Endothelial cell of umbilical vein (primary cell): ENCODE measurements at regions of chr3 and their contacts with region 1.

Region 1: GRCh38 chr3:53269888-53270880 is 14.4 kb upstream of the TKT start:
- DNase-seq: peak; percentile 90
- H3K4me3 ChIP-seq: no peak overlapping the region
- H3K27ac ChIP-seq: peak overlapping the region; percentile 96
- H3K4me1 ChIP-seq: peaks cover 13% of the 10 kb centered on the region
- H3K27me3 ChIP-seq: no peaks in the 10 kb centered on the region
- CTCF ChIP-seq: no peak
- POLR2A ChIP-seq: no peak

Region 2: DNA sequence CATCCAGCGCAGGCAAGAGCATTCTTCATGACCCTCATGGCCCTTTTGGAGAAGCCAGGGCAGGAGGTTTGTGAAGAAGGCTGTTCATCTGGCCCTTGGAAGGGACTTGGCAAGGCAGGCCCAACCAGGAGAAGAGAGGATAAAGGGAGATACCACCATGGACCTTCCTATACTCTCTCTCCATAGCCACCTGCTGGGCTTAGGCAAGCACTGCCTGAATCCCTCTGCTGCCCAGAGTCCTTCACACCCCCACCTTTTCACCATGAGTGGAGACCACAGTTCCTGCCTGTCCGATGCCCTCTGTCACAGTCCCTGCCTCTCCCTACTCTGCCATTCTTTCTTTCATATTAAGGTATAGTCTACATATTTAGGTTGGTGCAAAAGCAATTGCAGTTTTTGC is 213.7 kb before region 1 on chr3:
- CTCF ChIA-PET with region 1: no interaction called
- POLR2A ChIA-PET with region 1: no interaction called
- dilution Hi-C with region 1: no loop called
- intact Hi-C with region 1: no loop called
- DNase-seq: no peak
- H3K4me3 ChIP-seq: no peak overlapping the region
- H3K27ac ChIP-seq: no peak overlapping the region
- H3K4me1 ChIP-seq: no peaks in the 10 kb centered on the region
- H3K27me3 ChIP-seq: no peaks in the 10 kb centered on the region
- CTCF ChIP-seq: peak; percentile 5 to 40
- POLR2A ChIP-seq: no peak

Region 3: DNA sequence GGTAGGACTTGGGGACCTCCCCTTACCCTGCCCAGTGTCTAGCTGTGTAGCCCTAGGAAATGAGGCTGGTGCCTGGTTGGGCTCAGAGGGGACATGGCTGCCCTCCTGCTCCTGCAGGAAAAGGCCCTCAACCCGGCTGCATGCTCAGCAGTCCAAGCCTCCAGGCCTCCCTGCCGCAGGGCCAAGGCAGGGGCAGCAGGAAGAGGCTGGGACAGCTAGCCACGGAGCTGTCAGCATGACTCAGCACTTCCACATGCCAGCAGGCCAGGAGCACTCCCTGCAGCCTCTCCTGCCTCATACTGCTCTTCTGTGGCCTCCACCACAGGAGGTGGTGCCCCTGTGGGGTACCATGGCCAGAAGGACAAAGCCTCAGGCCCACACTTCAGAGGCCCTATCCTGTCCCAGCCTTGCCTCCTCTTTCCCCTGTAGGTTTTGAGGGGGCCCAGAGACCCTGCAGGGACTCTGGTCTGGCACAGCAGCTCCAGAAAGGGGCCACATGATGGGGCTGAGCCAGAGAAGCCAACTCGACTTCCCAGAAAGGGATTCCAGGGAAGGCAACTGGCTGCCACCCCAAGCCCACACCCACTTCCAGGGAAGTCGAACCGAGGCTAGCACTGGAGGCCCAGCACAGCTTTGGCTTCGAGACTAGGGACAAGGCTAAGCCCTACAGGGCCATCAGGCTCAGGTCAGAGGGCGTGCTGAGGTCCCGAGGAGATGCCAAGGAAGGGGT is 33.9 kb before region 1 on chr3:
- CTCF ChIA-PET with region 1: interaction called, 3 read pairs
- POLR2A ChIA-PET with region 1: no interaction called
- dilution Hi-C with region 1: no loop called
- intact Hi-C with region 1: loop called (anchors 1 kb)
- DNase-seq: peak; percentile 90
- H3K4me3 ChIP-seq: no peak overlapping the region
- H3K27ac ChIP-seq: peak overlapping the region; percentile 88
- H3K4me1 ChIP-seq: peaks cover 39% of the 10 kb centered on the region
- H3K27me3 ChIP-seq: no peaks in the 10 kb centered on the region
- CTCF ChIP-seq: no peak
- POLR2A ChIP-seq: peak; percentile 46

Region 4: GRCh38 chr3:53255775-53256703 is 14.1 kb before region 1 on chr3 and contains the start of gene TKT:
- CTCF ChIA-PET with region 1: interaction called, 4 read pairs
- POLR2A ChIA-PET with region 1: no interaction called
- dilution Hi-C with region 1: no loop called
- intact Hi-C with region 1: loop called (anchors 1 kb)
- DNase-seq: peak; percentile 84
- H3K4me3 ChIP-seq: peak within 1 kb of the TSS; percentile 70 to 98 (median 88)
- H3K27ac ChIP-seq: peak within 1 kb of the TSS; percentile 44
- H3K4me1 ChIP-seq: peaks cover 20% of the 10 kb centered on the region
- H3K27me3 ChIP-seq: no peaks in the 10 kb centered on the region
- CTCF ChIP-seq: no peak
- POLR2A ChIP-seq: peak; percentile 91
- total RNA-seq, gene TKT: 510 and 586 TPM in 2 replicates

Region 5: DNA sequence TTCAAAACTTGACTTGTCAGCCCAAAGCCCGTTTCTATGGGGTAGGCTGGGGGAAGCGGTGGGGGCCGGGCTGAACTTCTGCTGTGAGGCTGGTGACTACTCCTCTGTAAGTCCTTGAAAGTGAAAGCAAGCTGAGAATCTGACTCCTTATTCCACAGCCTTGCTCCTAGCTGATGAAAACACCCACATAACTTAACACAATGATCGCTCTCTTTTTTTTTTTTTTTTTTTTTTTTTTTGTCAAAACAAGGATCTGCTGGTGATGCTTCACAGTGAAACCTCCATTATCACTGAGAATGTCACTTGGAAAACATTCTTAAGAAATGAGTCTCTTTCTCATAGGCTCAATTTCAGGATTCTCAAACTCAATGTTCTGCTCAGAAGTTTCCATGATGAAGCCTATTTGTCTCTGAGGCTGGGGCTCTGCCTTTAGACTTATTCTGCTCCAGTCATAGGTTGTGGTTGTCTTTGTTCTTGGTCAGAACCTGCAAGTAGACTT is 17.0 kb after region 1 on chr3:
- CTCF ChIA-PET with region 1: interaction called, 13 read pairs
- POLR2A ChIA-PET with region 1: no interaction called
- dilution Hi-C with region 1: no loop called
- intact Hi-C with region 1: no loop called
- DNase-seq: no peak
- H3K4me3 ChIP-seq: no peak overlapping the region
- H3K27ac ChIP-seq: no peak overlapping the region
- H3K4me1 ChIP-seq: no peaks in the 10 kb centered on the region
- H3K27me3 ChIP-seq: no peaks in the 10 kb centered on the region
- CTCF ChIP-seq: no peak
- POLR2A ChIP-seq: no peak

Region 6: GRCh38 chr3:53375019-53375418 is 104.8 kb after region 1 on chr3:
- CTCF ChIA-PET with region 1: no interaction called
- POLR2A ChIA-PET with region 1: no interaction called
- dilution Hi-C with region 1: no loop called
- intact Hi-C with region 1: no loop called
- DNase-seq: peak; percentile 55
- H3K4me3 ChIP-seq: no peak overlapping the region
- H3K27ac ChIP-seq: no peak overlapping the region
- H3K4me1 ChIP-seq: no peaks in the 10 kb centered on the region
- H3K27me3 ChIP-seq: peaks cover 0 to 7% of the 10 kb centered on the region in 2 experiments
- CTCF ChIP-seq: peak; percentile 74 to 77
- POLR2A ChIP-seq: no peak